ENCODE measurements at regions of chr15 and their contacts with region 1.

Region 1: GRCh38 chr15:40160689-40161688 is at the start of gene BUB1B:
- DNase-seq: peak; percentile 84 to 96 (median 90)
- ATAC-seq: peak; percentile 99
- H3K4me3 ChIP-seq: peak within 1 kb of the TSS; percentile 78
- H3K4me3 Mint-ChIP-seq: no peak within 1 kb of the TSS
- H3K27ac ChIP-seq: no peak within 1 kb of the TSS
- H3K27ac Mint-ChIP-seq: no peak within 1 kb of the TSS
- H3K4me1 ChIP-seq: peaks cover 12% of the 10 kb centered on the region
- H3K4me1 Mint-ChIP-seq: no peaks in the 10 kb centered on the region
- H3K27me3 ChIP-seq: no peaks in the 10 kb centered on the region
- H3K27me3 Mint-ChIP-seq: no peaks in the 10 kb centered on the region
- CTCF ChIP-seq: no peak
- total RNA-seq, gene BUB1B: 1.4 to 2.4 TPM

Region 2: DNA sequence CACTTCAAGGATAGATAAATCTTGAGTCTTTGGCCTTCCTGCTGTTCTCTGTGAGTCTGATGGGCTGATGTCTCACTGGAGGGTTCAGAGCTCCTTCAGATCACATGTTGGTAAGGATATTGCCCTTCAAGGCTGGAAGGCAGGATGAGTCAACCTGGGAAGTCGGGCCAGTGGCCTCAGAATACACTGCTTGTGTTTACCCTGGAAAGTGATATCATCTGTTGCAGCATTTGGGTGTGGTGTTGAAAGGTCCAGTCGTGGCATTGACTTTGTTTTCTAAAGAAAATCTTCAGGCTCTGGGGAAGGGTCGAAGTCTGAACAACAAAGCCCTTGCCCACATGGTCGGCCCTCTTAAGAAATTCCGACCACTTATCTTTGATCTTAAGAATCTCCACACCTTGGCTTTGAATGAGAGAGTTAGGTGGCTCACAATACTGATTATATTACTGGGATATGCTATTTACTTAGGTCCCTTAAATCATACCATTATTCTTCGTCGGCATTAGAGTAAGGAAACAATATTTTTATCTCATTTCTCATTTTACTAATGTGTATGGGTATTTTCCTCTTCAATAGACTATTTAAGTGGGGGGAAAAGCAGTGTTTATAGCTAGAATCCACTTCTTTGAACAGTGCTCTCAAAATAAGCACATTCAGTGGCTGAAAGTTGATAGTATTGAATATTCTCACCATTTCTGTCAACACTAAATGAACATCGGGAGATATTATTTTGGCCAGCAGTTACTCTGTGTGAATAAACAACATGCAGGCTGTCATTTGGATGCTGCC is 1292.5 kb before region 1 on chr15:
- CTCF ChIA-PET with region 1: no interaction called
- POLR2A ChIA-PET with region 1: no interaction called
- intact Hi-C with region 1: no loop called
- DNase-seq: no peak
- ATAC-seq: no peak
- H3K4me3 ChIP-seq: no peak overlapping the region
- H3K4me3 Mint-ChIP-seq: no peak overlapping the region
- H3K27ac ChIP-seq: no peak overlapping the region
- H3K27ac Mint-ChIP-seq: no peak overlapping the region
- H3K4me1 ChIP-seq: no peaks in the 10 kb centered on the region
- H3K4me1 Mint-ChIP-seq: no peaks in the 10 kb centered on the region
- H3K27me3 ChIP-seq: no peaks in the 10 kb centered on the region
- H3K27me3 Mint-ChIP-seq: peaks cover 31% of the 10 kb centered on the region
- CTCF ChIP-seq: no peak

Region 3: DNA sequence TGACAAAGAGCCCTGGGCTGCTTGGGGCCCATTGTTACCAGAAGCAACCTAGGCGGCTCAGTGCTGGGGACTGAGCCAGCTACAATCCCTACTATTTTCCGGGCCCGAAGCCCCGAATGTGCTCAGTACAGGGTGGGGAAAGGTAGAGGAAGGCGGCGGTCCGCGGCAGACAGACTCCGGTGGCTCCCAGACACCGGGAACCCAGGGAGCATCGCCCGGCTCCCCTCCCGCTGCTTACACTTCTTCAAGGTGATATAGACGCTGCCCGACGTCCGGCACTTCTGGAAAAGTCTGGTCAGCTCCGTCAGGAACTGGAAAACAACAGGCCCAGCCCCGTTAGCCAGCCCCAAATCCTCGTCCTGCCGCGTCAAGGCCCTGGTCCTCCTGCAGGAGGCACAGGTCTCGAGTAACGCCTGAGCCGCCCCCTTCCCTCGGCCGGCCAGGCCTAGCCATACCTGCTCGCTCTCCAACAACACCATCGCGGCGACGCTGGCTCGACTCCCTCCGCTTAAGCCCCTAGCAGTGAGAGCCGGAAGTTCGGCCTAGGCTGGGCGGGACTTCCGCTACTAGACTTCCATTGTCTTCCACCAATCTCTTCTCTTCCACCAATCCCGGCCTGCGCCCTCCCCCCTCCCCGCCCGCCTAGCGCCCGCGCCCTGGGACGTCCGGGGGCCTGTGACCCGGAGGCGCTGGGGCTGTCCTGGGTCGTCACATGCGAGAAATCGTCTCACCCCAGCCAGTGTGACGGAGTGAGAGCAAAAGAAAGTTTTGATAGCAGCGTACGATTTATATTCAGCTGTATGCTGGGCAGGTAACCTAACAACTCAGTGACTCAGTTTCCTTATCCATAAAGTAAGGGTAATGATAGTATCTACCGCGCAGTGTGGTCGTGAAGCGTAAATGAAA is 122.1 kb before region 1 on chr15 and contains the start of gene SRP14:
- CTCF ChIA-PET with region 1: interaction called, 3 read pairs
- POLR2A ChIA-PET with region 1: no interaction called
- intact Hi-C with region 1: loop called in 1 of 2 experiments (anchors 2 kb)
- DNase-seq: peak; percentile 85 to 96 (median 90)
- ATAC-seq: peak; percentile 92
- H3K4me3 ChIP-seq: peak within 1 kb of the TSS; percentile 95
- H3K4me3 Mint-ChIP-seq: peak within 1 kb of the TSS; percentile 100
- H3K27ac ChIP-seq: peak within 1 kb of the TSS; percentile 88 to 90
- H3K27ac Mint-ChIP-seq: peak within 1 kb of the TSS; percentile 97
- H3K4me1 ChIP-seq: peaks cover 20% of the 10 kb centered on the region
- H3K4me1 Mint-ChIP-seq: peaks cover 49% of the 10 kb centered on the region
- H3K27me3 ChIP-seq: no peaks in the 10 kb centered on the region
- H3K27me3 Mint-ChIP-seq: no peaks in the 10 kb centered on the region
- CTCF ChIP-seq: no peak
- total RNA-seq, gene SRP14: 120 to 126 TPM

Region 4: DNA sequence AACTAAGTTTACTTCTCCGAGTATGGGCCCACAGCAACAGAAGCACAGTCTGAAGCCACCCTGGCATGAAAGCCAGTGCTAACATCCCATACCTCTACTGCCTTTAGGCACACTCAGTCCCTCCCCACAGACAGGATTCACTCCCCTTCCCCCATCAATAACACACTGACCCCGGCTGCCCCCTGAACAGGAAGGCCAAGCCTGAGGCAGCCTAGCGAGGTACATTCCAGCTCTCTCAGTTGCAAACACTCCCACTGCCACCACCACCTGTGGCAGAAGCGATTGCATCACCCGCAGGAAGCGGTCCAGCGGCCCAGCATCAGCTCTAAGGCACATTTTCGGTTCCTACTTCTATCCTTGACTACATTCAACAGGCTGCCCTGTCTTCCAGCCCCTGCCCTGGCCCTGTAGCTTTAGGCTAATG is 45.3 kb before region 1 on chr15:
- CTCF ChIA-PET with region 1: no interaction called
- POLR2A ChIA-PET with region 1: no interaction called
- intact Hi-C with region 1: no loop called
- DNase-seq: peak in 6 of 14 experiments; percentile 9 to 64 (median 55)
- ATAC-seq: peak; percentile 83
- H3K4me3 ChIP-seq: no peak overlapping the region
- H3K4me3 Mint-ChIP-seq: peak overlapping the region; percentile 49
- H3K27ac ChIP-seq: no peak overlapping the region
- H3K27ac Mint-ChIP-seq: no peak overlapping the region
- H3K4me1 ChIP-seq: peaks cover 16% of the 10 kb centered on the region
- H3K4me1 Mint-ChIP-seq: peaks cover 18% of the 10 kb centered on the region
- H3K27me3 ChIP-seq: no peaks in the 10 kb centered on the region
- H3K27me3 Mint-ChIP-seq: no peaks in the 10 kb centered on the region
- CTCF ChIP-seq: no peak

Region 5: DNA sequence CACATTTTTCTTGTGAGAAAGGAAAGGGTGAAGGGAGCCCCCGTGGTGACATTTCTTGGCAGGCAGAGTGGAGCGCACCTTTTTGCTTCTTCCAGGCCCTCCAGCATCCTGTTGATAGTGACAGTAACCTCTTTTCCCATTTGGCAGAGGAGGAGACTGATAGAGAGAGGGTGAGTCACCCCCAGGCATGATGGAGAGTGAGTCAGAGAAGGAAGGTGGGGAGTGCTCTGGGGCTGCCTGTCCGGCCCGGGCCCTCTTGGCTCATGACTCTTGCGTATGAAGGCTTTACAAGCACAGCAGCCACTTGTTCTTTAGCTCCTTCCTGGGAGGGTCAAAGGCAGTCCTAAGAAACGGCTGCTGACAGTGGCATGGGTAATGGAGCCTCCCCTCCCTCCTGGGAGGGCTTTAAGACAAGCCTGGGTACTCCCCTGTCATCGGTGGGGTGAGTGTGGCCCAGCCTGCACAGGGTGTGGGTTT is 105.9 kb after region 1 on chr15:
- CTCF ChIA-PET with region 1: no interaction called
- POLR2A ChIA-PET with region 1: no interaction called
- intact Hi-C with region 1: no loop called
- DNase-seq: peak in 1 of 14 experiments; percentile 41
- ATAC-seq: no peak
- H3K4me3 ChIP-seq: no peak overlapping the region
- H3K4me3 Mint-ChIP-seq: no peak overlapping the region
- H3K27ac ChIP-seq: no peak overlapping the region
- H3K27ac Mint-ChIP-seq: no peak overlapping the region
- H3K4me1 ChIP-seq: no peaks in the 10 kb centered on the region
- H3K4me1 Mint-ChIP-seq: no peaks in the 10 kb centered on the region
- H3K27me3 ChIP-seq: no peaks in the 10 kb centered on the region
- H3K27me3 Mint-ChIP-seq: no peaks in the 10 kb centered on the region
- CTCF ChIP-seq: no peak

Measured in CD4-positive, alpha-beta T cell (primary cell).